PC-3 (cell line): ENCODE measurements at regions of chrX and their contacts with region 1.

Region 1: GRCh38 chrX:49191033-49191871 is 5.1 kb upstream of the PRICKLE3 start:
- DNase-seq: peak; percentile 98
- ATAC-seq: peak; percentile 87
- H3K4me3 ChIP-seq: peak overlapping the region; percentile 87
- H3K27ac ChIP-seq: peak overlapping the region; percentile 39
- H3K4me1 ChIP-seq: peaks cover 20% of the 10 kb centered on the region
- H3K27me3 ChIP-seq: no peaks in the 10 kb centered on the region
- CTCF ChIP-seq: no peak

Region 2: GRCh38 chrX:49155900-49156837 is 35.1 kb before region 1 on chrX:
- CTCF ChIA-PET with region 1: interaction called, 11 read pairs
- POLR2A ChIA-PET with region 1: no interaction called
- intact Hi-C with region 1: no loop called
- DNase-seq: peak; percentile 86
- ATAC-seq: peak; percentile 94
- H3K4me3 ChIP-seq: peak overlapping the region; percentile 57
- H3K27ac ChIP-seq: peak overlapping the region; percentile 80
- H3K4me1 ChIP-seq: peaks cover 6% of the 10 kb centered on the region; the same call in 1 of the 2 replicates
- H3K27me3 ChIP-seq: no peaks in the 10 kb centered on the region
- CTCF ChIP-seq: peak; percentile 67

Region 3: DNA sequence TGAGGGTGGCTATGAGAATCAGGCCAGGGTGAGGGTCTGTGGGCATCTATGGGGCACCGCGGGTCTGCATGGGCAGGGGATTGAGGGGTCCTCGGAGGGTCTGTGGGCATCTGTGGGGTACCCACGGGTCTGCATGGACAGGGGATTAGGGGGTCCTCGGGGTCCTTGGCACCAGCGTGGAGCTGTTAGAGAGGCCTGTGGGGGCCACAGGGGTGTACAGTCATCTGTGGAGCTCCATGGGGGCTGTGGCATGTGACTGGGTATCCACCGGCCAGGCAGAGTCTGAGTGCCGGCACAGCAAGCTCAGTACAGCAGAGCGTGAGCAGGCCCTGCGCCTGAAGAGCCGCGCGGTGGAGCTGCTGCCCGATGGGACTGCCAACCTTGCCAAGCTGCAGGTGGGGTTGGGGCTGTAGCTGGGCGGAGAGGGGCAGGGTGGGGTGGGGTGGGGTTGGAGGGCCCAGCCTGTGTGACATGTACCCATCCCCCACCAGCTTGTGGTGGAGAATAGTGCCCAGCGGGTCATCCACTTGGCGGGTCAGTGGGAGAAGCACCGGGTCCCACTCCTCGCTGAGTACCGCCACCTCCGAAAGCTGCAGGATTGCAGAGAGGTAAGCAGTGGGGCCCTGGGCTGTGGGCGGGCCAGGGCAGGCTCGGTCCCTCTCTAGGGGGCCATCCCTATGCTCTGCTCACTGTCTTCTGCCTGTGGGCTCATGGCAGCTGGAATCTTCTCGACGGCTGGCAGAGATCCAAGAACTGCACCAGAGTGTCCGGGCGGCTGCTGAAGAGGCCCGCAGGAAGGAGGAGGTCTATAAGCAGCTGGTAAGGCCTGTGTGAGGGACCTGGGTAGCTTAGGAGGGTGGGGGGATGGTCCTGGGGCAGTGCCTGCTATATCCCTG is 56.9 kb after region 1 on chrX:
- CTCF ChIA-PET with region 1: no interaction called
- POLR2A ChIA-PET with region 1: no interaction called
- intact Hi-C with region 1: no loop called
- DNase-seq: no peak
- ATAC-seq: no peak
- H3K4me3 ChIP-seq: no peak overlapping the region
- H3K27ac ChIP-seq: no peak overlapping the region
- H3K4me1 ChIP-seq: no peaks in the 10 kb centered on the region
- H3K27me3 ChIP-seq: no peaks in the 10 kb centered on the region
- CTCF ChIP-seq: no peak

Region 4: DNA sequence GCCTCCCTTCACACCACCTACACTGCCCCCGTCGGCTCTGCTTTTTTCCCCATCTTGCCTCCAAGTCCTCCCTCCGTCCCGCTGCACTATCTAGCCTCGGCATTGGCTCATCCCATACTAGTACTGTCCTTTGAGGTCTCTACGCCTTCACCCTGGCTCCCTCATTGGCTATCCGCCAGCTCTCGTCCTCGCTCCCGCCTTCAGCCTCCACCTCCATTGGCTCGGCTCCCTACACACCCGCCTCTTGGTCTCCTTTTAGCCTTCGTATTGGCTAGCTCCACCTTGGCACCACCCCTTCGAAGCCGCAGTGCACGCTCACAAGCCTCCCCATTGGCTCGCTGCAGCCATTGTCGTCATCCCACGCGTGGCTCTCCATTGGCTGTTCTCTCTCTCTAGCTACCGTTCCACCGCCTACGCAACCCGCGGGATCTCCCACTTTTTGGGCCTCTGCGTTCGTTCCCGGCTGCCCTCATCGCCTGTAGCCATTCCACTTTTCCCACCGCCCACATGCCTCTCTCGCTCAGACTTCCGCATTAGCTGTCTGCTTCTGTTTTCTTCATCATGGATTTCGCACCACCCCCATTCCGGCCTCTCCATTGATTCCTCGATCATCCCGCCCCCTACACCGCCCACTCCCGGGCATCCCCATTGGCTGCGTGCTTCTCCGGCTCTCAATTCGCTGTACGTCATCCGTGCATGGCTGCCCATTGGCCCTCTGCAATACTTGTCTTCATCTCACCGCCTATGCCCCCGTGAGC is 77.9 kb after region 1 on chrX:
- CTCF ChIA-PET with region 1: no interaction called
- POLR2A ChIA-PET with region 1: interaction called, 11 read pairs
- intact Hi-C with region 1: loop called (anchors 1 kb)
- DNase-seq: peak; percentile 98
- ATAC-seq: peak; percentile 90
- H3K4me3 ChIP-seq: peak overlapping the region; percentile 70
- H3K27ac ChIP-seq: peak overlapping the region; percentile 84
- H3K4me1 ChIP-seq: peaks cover 30% of the 10 kb centered on the region
- H3K27me3 ChIP-seq: no peaks in the 10 kb centered on the region
- CTCF ChIP-seq: no peak

Region 5: GRCh38 chrX:49754233-49754857 is 563.1 kb after region 1 on chrX:
- CTCF ChIA-PET with region 1: no interaction called
- POLR2A ChIA-PET with region 1: no interaction called
- intact Hi-C with region 1: loop called (anchors 10 kb)
- DNase-seq: peak; percentile 58
- ATAC-seq: peak; percentile 67
- H3K4me3 ChIP-seq: no peak overlapping the region
- H3K27ac ChIP-seq: no peak overlapping the region
- H3K4me1 ChIP-seq: no peaks in the 10 kb centered on the region
- H3K27me3 ChIP-seq: peaks cover 15% of the 10 kb centered on the region
- CTCF ChIP-seq: peak; percentile 73